ENCODE measurements at regions of chr12 and their contacts with region 1.

Region 1: GRCh38 chr12:22334410-22335290 is at the start of gene ST8SIA1:
- DNase-seq: peak; percentile 54
- H3K4me3 Mint-ChIP-seq: peak within 1 kb of the TSS; percentile 87
- H3K27ac Mint-ChIP-seq: peak within 1 kb of the TSS; percentile 33
- H3K4me1 Mint-ChIP-seq: peaks cover 14% of the 10 kb centered on the region
- H3K27me3 Mint-ChIP-seq: peaks cover 23% of the 10 kb centered on the region
- total RNA-seq, gene ST8SIA1: 0.84 to 1.7 TPM

Region 2: GRCh38 chr12:21773263-21773741 is 561.3 kb before region 1 on chr12:
- CTCF ChIA-PET with region 1: no interaction called
- intact Hi-C with region 1: loop called (anchors 10 kb)
- DNase-seq: peak; percentile 38
- H3K4me3 Mint-ChIP-seq: peak overlapping the region; percentile 27
- H3K27ac Mint-ChIP-seq: no peak overlapping the region
- H3K4me1 Mint-ChIP-seq: peaks cover 10% of the 10 kb centered on the region
- H3K27me3 Mint-ChIP-seq: peaks cover 37% of the 10 kb centered on the region

Region 3: DNA sequence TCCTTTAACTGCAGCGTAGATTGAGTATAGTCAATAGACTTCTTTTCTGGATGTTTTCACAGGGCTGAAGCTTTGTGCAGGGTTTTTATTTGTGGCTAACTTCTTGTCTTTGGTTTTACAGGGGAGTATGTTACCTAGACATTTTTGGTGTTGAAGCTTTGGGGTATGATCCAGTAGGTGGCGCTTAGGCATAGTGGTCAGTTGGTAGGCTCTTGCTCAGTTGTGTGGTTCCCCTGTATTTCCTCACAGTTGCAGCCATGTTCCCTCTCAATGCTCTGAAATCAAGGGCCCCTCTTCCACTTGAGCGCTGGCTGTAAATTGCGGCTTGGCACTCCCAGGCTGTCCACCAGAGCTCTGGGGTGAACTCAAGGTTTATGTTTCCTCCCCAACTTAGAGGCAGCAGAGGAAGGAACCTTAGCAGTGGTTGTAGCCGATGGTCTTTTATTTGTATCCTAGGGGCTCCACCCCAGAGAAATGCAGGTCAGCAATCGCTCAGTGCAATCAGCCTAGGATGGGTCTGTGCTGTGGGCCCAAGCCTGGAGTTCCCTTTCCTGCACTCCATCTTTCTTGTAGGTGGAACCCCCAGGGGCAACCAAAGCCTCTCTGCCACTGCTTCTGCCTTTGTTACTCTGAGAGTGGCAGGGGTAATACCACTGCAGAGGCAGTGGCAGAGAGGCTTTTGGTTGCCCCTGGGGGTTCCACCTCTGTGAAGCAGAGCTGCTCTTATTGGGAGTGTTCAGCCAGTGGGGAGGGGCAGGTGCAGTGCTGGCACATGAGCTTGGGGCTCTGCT is 233.5 kb before region 1 on chr12:
- CTCF ChIA-PET with region 1: interaction called, 9 read pairs
- intact Hi-C with region 1: loop called (anchors 1 kb)
- DNase-seq: peak; percentile 76
- H3K4me3 Mint-ChIP-seq: no peak overlapping the region
- H3K27ac Mint-ChIP-seq: no peak overlapping the region
- H3K4me1 Mint-ChIP-seq: peaks cover 14% of the 10 kb centered on the region
- H3K27me3 Mint-ChIP-seq: no peaks in the 10 kb centered on the region

Region 4: DNA sequence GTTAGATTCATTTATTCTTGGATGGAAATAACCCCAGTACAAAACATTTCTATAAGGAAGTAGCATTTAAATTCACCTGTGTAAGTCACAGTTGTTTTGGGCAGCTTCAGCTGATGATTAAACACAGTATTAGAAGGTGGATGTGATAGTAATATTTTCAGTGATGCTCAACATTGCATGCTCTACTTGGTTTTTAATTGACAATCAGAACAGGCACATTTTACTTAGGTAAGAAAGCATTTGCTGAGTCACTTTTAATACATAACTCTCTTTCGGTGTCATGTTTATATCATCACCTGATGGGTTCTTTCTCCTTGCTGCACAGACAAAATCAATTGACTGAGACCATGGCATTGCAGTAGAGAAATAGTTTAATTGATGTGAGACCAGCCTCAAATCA is 207.9 kb before region 1 on chr12:
- CTCF ChIA-PET with region 1: no interaction called
- intact Hi-C with region 1: loop called (anchors 1 kb)
- DNase-seq: no peak
- H3K4me3 Mint-ChIP-seq: no peak overlapping the region
- H3K27ac Mint-ChIP-seq: no peak overlapping the region
- H3K4me1 Mint-ChIP-seq: peaks cover 11% of the 10 kb centered on the region
- H3K27me3 Mint-ChIP-seq: no peaks in the 10 kb centered on the region

Region 5: DNA sequence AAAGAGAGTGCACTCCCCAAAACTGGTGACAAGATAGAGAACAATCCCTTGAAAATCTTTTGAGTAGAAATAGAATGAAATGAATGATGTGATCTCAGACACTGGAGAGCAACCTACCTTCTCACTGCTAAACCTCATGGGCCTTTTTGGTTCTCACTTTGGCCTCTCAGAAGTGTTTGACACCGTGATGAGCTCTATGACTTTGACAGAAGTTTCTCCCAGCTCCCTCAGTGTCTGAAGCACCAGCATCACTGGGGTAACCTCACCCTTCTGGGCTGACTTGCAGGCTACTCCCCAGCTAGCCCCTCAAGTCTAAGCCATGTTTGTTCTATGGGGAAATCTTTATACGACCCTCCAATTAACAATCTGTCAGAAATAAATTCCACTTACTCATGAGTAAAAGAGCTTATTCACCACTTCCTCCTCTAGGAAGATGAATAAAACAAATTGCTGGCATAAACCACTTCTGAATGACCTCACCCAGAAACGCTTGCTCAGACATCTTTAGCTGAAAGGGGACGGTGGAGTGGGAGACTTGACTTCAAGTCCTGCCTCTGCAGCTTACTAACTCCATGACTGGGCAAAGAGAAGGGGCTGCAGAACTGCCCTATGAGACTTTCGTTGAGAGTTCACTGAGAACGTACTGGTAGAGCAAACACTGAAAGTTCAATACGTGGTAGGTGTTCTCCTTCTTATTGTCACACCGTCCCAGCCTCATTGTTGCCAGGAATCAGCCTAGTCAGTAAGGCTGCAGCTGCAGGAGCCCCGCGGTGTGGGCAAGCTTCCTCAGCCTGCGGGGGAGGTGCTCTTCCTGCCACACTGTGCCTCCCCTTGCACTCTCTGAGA is 46.7 kb before region 1 on chr12:
- CTCF ChIA-PET with region 1: interaction called, 9 read pairs
- intact Hi-C with region 1: loop called (anchors 1 kb)
- DNase-seq: peak; percentile 50
- H3K4me3 Mint-ChIP-seq: peak overlapping the region; percentile 45
- H3K27ac Mint-ChIP-seq: peak overlapping the region; percentile 47
- H3K4me1 Mint-ChIP-seq: peaks cover 22% of the 10 kb centered on the region
- H3K27me3 Mint-ChIP-seq: no peaks in the 10 kb centered on the region

Region 6: DNA sequence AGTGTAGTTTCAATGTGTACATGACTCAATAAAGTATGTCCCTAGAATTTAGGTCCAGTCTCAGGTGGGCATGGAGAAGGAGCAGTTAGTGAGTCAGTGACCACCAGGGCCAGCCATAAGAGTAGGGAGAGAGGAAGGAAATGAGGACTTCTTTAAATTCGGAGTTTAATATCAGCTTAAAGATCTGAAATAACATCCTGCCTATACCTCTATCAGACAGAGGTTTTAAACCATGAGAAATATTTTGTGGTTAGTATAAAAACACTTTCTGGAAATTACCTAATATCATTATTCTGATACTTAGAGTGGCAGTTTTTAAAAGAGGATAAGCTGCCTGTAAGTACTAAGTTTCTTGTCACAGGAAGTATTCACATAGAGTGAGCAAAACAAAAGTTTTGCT is 61.6 kb after region 1 on chr12:
- CTCF ChIA-PET with region 1: interaction called, 8 read pairs
- intact Hi-C with region 1: loop called (anchors 2 kb)
- DNase-seq: peak; percentile 24
- H3K4me3 Mint-ChIP-seq: no peak overlapping the region
- H3K27ac Mint-ChIP-seq: peak overlapping the region; percentile 80
- H3K4me1 Mint-ChIP-seq: peaks cover 39% of the 10 kb centered on the region
- H3K27me3 Mint-ChIP-seq: no peaks in the 10 kb centered on the region

Region 7: DNA sequence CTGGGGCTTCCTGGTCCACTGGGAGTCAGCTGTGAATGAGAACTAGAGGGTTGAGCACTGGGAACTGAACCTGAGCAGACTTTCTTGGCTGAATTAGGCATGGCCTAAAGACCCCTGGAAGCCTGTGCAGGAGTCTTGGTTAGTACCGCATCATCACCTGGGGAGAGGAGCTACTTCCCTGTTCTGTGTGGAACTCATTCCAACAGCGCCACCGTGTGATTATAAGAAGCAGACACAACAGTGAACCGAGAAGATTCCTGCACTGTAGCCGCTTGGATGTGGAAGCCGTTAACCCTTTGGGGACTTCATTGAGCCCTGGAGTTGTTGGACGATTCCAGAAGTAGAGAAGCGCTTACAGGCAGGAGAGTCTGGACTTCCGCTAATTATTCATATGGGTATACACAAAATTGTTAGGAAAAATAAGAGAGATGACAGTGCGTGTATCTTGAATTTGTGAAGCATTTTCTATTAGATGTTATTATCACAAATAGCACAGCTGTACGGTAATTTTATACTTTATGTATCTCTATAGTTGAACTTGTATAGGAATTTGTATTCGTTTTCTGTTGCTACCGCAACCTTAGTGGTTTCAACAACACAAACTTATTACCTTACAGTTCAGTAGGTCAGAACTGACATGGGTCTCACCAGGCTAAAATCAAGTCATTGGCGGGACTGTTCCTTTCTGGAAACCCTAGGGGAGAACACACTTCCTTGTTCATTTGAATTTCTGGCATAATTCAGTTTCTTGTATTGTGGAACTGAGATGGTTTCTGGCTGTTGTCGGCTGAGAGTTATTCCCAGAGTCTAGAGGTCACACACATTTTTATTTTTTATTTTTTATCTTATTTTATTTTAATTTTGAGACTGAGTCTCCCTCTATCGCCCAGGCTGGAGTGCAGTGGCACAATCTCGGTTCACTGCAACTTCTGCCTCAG is 109.0 kb after region 1 on chr12:
- CTCF ChIA-PET with region 1: interaction called, 23 read pairs
- intact Hi-C with region 1: loop called (anchors 1 kb)
- DNase-seq: peak; percentile 75
- H3K4me3 Mint-ChIP-seq: no peak overlapping the region
- H3K27ac Mint-ChIP-seq: no peak overlapping the region
- H3K4me1 Mint-ChIP-seq: peaks cover 3% of the 10 kb centered on the region
- H3K27me3 Mint-ChIP-seq: no peaks in the 10 kb centered on the region

Region 8: DNA sequence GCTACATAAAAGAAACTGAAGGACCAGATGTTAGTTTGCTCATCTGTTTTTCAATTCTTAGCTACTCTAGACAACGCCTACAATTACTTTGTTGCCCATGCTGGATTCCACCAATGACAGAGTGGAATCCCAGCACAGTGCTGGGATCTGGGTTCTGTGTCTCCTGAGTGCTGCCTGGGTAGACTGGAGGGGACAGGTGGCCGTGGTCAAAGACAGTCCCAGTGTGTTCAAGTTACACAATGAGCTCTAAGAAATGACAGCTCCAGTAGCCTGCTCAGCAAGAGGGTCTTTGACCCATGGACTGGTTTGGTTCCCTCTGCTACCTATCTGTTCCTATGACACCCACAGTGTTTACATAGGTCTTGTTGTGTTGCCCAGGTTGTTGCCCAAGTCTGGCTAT is 171.2 kb after region 1 on chr12:
- CTCF ChIA-PET with region 1: no interaction called
- intact Hi-C with region 1: no loop called
- DNase-seq: no peak
- H3K4me3 Mint-ChIP-seq: no peak overlapping the region
- H3K27ac Mint-ChIP-seq: no peak overlapping the region
- H3K4me1 Mint-ChIP-seq: no peaks in the 10 kb centered on the region
- H3K27me3 Mint-ChIP-seq: no peaks in the 10 kb centered on the region

Region 9: GRCh38 chr12:23025372-23026016 is 690.8 kb after region 1 on chr12:
- CTCF ChIA-PET with region 1: no interaction called
- intact Hi-C with region 1: no loop called
- DNase-seq: no peak
- H3K4me3 Mint-ChIP-seq: no peak overlapping the region
- H3K27ac Mint-ChIP-seq: no peak overlapping the region
- H3K4me1 Mint-ChIP-seq: no peaks in the 10 kb centered on the region
- H3K27me3 Mint-ChIP-seq: no peaks in the 10 kb centered on the region

Measured in activated naive CD4-positive, alpha-beta T cell treated with anti-CD3 and anti-CD28 coated beads for 36 hours (primary cell).